IMR-90 (cell line): ENCODE measurements at regions of chr4 and their contacts with region 1.

Region 1: DNA sequence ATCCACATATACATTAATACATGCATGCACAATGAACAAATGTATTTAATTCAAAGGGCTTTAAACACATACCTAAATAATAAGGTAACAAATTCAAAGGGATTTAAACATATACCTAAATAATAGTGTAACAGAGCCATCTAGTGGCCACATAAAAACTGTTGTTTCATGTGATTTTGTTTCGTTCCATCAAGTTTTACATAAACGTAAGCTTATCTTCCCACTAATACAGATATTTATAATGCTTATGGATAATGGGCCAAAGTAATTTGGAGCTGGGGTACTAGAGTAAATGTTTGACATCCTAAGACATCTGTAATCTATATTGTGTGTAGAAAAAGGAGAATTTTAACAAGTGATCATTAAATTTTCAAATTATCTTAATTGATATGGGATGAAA is 82.3 kb downstream of the PRSS12 start:
- DNase-seq: peak; percentile 66
- ATAC-seq: peak; percentile 68; the same call in 1 of the 2 replicates
- H3K4me3 ChIP-seq: no peak overlapping the region
- H3K27ac ChIP-seq: no peak overlapping the region
- H3K4me1 ChIP-seq: no peaks in the 10 kb centered on the region
- H3K27me3 ChIP-seq: peaks cover 2% of the 10 kb centered on the region
- CTCF ChIP-seq: peak; percentile 68
- POLR2A ChIP-seq: no peak
- RAD21 ChIP-seq: peak; percentile 61

Region 2: GRCh38 chr4:117357437-117357836 is 913.1 kb before region 1 on chr4:
- CTCF ChIA-PET with region 1: no interaction called
- POLR2A ChIA-PET with region 1: no interaction called
- dilution Hi-C with region 1: no loop called
- in situ Hi-C with region 1: loop called (anchors 25 kb)
- intact Hi-C with region 1: no loop called
- DNase-seq: no peak
- ATAC-seq: no peak; the same call in none of the 2 replicates
- H3K4me3 ChIP-seq: no peak overlapping the region
- H3K27ac ChIP-seq: no peak overlapping the region
- H3K4me1 ChIP-seq: 0 out of 2 replicates have a peak, but pooled peaks cover 1% of the 10 kb centered on the region
- H3K27me3 ChIP-seq: no peaks in the 10 kb centered on the region
- CTCF ChIP-seq: no peak
- POLR2A ChIP-seq: no peak
- RAD21 ChIP-seq: no peak

Region 3: DNA sequence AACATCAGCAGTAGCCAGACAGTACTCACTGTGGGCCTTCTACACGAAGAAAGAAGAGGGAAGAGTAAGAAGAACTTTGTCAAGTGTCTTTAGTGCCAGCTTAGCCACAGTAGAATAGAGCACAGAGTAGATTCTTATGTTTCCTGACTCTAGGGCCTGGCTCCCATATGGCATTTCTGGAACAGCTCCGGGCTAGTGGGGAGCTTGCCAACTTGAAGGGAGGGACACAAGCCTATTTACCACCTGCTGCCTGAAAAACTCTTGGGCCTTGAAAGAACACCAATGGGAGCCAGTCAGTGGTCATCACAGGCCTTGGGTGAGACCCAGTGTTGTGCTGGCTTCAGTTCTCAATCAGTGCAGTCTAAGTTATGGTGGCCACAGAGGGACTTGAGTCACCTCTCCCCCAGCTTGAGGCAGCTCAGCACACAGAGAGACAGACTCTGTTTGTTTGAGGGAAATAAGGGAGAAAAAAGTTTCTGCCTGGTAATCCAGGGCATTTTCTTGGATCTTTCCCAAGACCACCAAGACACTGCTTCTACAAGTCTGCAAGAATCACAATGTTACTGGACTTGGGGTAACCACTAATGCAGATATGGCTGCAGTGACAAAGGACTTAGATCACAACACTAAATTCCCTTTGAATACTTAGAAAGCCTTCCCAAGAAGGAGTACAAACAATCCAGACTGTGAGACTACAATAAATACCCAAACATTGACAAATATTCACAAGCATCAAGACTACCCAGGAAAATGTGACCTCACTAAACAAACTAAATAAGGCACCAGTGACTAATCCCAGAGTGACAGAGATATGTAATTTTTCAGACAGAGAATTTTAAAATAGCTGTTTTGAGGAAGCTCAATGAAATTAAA is 497.2 kb before region 1 on chr4:
- CTCF ChIA-PET with region 1: no interaction called
- POLR2A ChIA-PET with region 1: no interaction called
- dilution Hi-C with region 1: no loop called
- in situ Hi-C with region 1: no loop called
- intact Hi-C with region 1: no loop called
- DNase-seq: no peak
- ATAC-seq: no peak
- H3K4me3 ChIP-seq: no peak overlapping the region
- H3K27ac ChIP-seq: no peak overlapping the region
- H3K4me1 ChIP-seq: no peaks in the 10 kb centered on the region
- H3K27me3 ChIP-seq: no peaks in the 10 kb centered on the region
- CTCF ChIP-seq: no peak
- POLR2A ChIP-seq: no peak
- RAD21 ChIP-seq: no peak

Region 4: DNA sequence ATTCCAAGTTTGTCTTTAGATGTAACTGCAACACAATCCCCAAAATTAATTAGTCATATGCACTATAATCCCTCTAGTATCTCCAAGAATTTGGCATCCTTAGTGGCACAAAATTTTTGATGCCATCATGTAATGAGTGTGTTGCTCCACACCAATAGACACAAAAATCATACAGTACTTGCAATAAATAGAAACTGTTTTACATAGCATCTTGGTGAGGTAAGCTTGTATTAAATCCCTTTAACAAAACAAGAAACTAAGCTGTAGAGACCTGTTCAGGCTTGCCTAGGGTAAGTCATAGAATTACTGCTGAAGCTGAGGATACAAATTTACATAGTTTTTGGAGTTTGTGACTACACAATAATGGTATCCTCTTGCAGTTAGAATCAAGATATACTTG is 146.8 kb after region 1 on chr4:
- CTCF ChIA-PET with region 1: no interaction called
- POLR2A ChIA-PET with region 1: no interaction called
- dilution Hi-C with region 1: no loop called
- in situ Hi-C with region 1: no loop called
- intact Hi-C with region 1: no loop called
- DNase-seq: peak; percentile 85
- ATAC-seq: peak; percentile 96
- H3K4me3 ChIP-seq: no peak overlapping the region
- H3K27ac ChIP-seq: peak overlapping the region; percentile 96; the same call in 1 of the 2 replicates
- H3K4me1 ChIP-seq: peaks cover 2% of the 10 kb centered on the region; the same call in 1 of the 2 replicates
- H3K27me3 ChIP-seq: no peaks in the 10 kb centered on the region
- CTCF ChIP-seq: no peak
- POLR2A ChIP-seq: no peak
- RAD21 ChIP-seq: no peak